Activated CD8-positive, alpha-beta T cell treated with anti-CD3 and anti-CD28 coated beads for 36 hours (primary cell): ENCODE measurements at regions of chr2 and their contacts with region 1.

Region 1: DNA sequence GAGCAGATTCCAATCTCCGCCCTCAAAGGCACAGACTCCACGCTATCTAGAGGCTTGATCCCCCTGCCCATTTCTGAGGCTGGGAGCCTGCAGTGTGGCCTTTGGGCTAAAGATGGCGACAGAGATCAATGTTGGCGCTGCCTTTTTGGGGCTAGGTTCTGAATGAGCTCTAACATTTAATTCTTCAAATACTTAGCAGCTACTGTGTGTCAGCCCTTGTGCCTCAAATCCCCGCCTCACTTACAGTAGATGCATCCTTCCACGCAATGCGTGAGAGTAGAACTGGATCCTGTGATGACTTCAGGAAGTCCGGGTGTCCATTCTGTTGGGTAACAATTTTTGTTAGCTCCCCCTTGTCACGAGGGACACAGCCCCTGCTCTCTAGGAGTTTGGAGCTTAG is 12.4 kb downstream of the IL1F10 start:
- DNase-seq: peak; percentile 67
- ATAC-seq: peak; percentile 81
- H3K4me3 Mint-ChIP-seq: no peak overlapping the region
- H3K27ac Mint-ChIP-seq: no peak overlapping the region
- H3K4me1 Mint-ChIP-seq: peaks cover 12% of the 10 kb centered on the region
- H3K27me3 Mint-ChIP-seq: no peaks in the 10 kb centered on the region
- CTCF ChIP-seq: peak; percentile 87

Region 2: GRCh38 chr2:113060396-113060795 is 19.7 kb before region 1 on chr2:
- CTCF ChIA-PET with region 1: interaction called, 11 read pairs
- POLR2A ChIA-PET with region 1: no interaction called
- intact Hi-C with region 1: no loop called
- DNase-seq: no peak
- ATAC-seq: no peak
- H3K4me3 Mint-ChIP-seq: no peak overlapping the region
- H3K27ac Mint-ChIP-seq: no peak overlapping the region
- H3K4me1 Mint-ChIP-seq: peaks cover 8% of the 10 kb centered on the region
- H3K27me3 Mint-ChIP-seq: peaks cover 3% of the 10 kb centered on the region
- CTCF ChIP-seq: no peak

Region 3: DNA sequence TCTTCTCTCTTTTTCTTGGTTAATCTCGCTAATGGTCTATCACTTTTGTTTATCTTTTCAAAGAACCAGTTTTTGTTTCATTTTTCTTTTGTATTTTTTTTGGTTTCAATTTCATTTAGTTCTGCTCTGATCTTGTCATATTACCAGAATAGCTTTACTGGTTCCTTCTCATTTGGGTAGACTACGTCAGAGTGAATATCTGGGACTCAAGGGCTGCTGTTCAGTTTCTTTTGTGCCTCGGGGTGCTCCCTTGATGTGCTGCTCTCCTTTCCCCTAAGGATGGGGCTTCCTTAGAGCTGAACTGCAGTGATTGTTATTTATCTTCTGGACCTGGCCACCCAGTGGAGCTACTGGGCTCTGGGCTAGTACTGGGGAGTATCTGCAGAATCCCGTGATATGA is 17.9 kb after region 1 on chr2:
- CTCF ChIA-PET with region 1: interaction called, 19 read pairs
- POLR2A ChIA-PET with region 1: interaction called, 3 read pairs
- intact Hi-C with region 1: no loop called
- DNase-seq: peak; percentile 14
- ATAC-seq: peak; percentile 81
- H3K4me3 Mint-ChIP-seq: peak overlapping the region; percentile 26
- H3K27ac Mint-ChIP-seq: peak overlapping the region; percentile 76
- H3K4me1 Mint-ChIP-seq: peaks cover 32% of the 10 kb centered on the region
- H3K27me3 Mint-ChIP-seq: no peaks in the 10 kb centered on the region
- CTCF ChIP-seq: no peak

Region 4: DNA sequence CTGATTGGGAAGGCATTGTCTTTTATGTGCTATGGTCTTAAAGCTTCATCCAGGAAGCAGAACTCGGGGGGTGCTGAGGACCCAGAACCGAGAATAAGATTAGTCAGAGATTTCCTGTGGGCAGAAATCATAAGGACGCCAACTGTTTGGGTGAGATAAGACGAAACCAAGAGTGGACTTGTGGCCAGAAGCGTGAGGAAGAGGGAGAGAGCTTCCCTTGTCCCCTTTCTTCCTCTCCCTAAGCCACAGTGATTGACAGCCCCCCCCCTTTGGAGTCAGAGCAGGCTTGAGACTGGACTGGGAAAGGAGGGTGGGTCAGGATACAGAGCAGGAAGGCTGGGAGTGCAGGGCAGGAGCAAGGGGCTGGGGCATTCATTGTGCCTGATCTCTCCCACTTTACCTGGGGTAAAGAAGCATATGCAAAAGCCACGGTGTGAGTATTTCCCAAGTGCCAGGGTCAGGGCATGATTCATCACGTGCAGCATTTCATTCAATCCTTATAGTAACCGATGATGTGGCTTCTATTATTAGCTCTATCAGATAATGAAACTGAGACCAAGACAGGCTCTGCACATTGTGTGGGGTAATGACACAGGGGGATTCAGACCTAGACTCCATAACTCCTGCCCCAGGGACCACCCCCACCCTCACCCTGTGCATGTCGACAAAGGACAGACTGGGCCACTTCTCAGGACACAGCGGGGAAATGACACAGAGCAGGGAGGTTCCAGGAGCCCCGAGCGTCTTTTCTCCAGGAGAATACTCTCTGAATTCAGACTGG is 44.2 kb after region 1 on chr2:
- CTCF ChIA-PET with region 1: interaction called, 18 read pairs
- POLR2A ChIA-PET with region 1: no interaction called
- intact Hi-C with region 1: no loop called
- DNase-seq: peak; percentile 48
- ATAC-seq: peak; percentile 76
- H3K4me3 Mint-ChIP-seq: peak overlapping the region; percentile 24
- H3K27ac Mint-ChIP-seq: no peak overlapping the region
- H3K4me1 Mint-ChIP-seq: peaks cover 35% of the 10 kb centered on the region
- H3K27me3 Mint-ChIP-seq: peaks cover 6% of the 10 kb centered on the region
- CTCF ChIP-seq: no peak

Region 5: GRCh38 chr2:113173542-113174395 is 93.6 kb after region 1 on chr2 and contains the start of gene PSD4:
- CTCF ChIA-PET with region 1: interaction called, 10 read pairs
- POLR2A ChIA-PET with region 1: no interaction called
- intact Hi-C with region 1: no loop called
- DNase-seq: peak; percentile 95
- ATAC-seq: peak; percentile 77
- H3K4me3 Mint-ChIP-seq: peak within 1 kb of the TSS; percentile 84
- H3K27ac Mint-ChIP-seq: peak within 1 kb of the TSS; percentile 98
- H3K4me1 Mint-ChIP-seq: peaks cover 68% of the 10 kb centered on the region
- H3K27me3 Mint-ChIP-seq: no peaks in the 10 kb centered on the region
- CTCF ChIP-seq: no peak
- total RNA-seq, gene PSD4: 247 to 251 TPM

Region 6: GRCh38 chr2:113198790-113199612 is 118.9 kb after region 1 on chr2:
- CTCF ChIA-PET with region 1: interaction called, 26 read pairs
- POLR2A ChIA-PET with region 1: interaction called, 3 read pairs
- intact Hi-C with region 1: no loop called
- DNase-seq: peak; percentile 75
- ATAC-seq: peak; percentile 74
- H3K4me3 Mint-ChIP-seq: no peak overlapping the region
- H3K27ac Mint-ChIP-seq: no peak overlapping the region
- H3K4me1 Mint-ChIP-seq: peaks cover 9% of the 10 kb centered on the region
- H3K27me3 Mint-ChIP-seq: no peaks in the 10 kb centered on the region
- CTCF ChIP-seq: peak; percentile 69